Gastrocnemius medialis (tissue), 4 donors: ENCODE measurements at regions of chr18 and their contacts with region 1.

Region 1: GRCh38 chr18:46073474-46074331 is 1.6 kb upstream of the PSTPIP2 start:
- DNase-seq: no peak
- ATAC-seq: peak; percentile 62 to 70
- H3K4me3 ChIP-seq: no peak overlapping the region
- H3K27ac ChIP-seq: no peak overlapping the region
- H3K4me1 ChIP-seq: peaks cover 16% of the 10 kb centered on the region in 2 donors
- H3K27me3 ChIP-seq: no peaks in the 10 kb centered on the region
- CTCF ChIP-seq: peak; percentile 58 to 72 (median 66)
- POLR2A ChIP-seq: no peak

Region 2: DNA sequence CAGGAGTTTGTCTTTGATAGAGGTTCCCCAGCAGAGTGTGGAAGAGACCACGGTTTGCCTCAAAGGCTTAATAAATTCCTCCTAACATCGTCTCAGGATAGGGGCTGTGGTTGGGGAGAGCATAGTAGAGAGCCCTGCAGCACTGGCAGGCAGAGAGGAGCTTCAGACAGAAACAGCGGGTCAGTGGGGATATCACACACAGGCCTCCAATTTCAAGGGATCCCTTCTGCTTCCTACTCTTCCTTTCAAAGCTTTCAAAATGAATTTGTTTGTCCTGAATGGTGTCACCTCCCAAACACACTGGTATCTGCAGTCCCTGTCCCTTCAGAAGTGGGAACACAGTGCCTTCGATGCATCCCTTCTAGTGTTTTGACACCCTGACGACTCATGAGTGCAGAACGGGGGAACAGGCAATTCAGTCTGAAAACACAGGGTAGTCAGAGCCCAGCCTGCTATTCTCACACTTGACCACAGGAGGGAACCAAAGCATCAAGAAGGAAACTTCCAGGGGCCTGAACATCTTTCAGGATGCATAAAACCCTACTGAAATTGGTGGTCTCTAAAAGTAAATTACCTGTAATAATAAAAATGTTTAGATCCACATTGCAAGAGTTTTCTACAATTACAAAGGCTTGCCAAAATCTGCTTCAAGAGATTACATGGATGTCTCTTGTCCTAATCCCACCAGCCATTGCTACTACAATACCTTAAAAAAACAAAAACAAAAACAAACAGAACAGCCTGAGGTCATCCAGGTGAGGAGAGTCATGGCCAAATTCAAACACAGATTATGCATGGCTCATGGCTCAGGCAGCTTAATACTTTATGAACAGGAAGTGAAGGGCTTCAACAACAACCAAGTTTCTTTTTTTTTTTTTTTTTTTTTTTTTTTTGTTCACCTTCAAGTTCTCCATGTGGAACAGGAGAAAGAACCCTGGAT is 408.6 kb before region 1 on chr18:
- in situ Hi-C with region 1: loop called in 2 of 4 experiments (anchors 10 to 25 kb)
- intact Hi-C with region 1: loop called (anchors 5 kb)
- DNase-seq: peak; percentile 24 to 44
- ATAC-seq: peak; percentile 51 to 54
- H3K4me3 ChIP-seq: no peak overlapping the region
- H3K27ac ChIP-seq: no peak overlapping the region
- H3K4me1 ChIP-seq: peaks cover 10 to 13% of the 10 kb centered on the region in 2 donors
- H3K27me3 ChIP-seq: no peaks in the 10 kb centered on the region
- CTCF ChIP-seq: peak; percentile 79 to 95 (median 82)
- POLR2A ChIP-seq: no peak

Region 3: GRCh38 chr18:45690975-45691815 is 382.5 kb before region 1 on chr18:
- in situ Hi-C with region 1: loop called in 1 of 4 experiments (anchors 25 kb)
- intact Hi-C with region 1: loop called (anchors 10 kb)
- DNase-seq: peak in 1 of 2 donors; percentile 44
- ATAC-seq: peak; percentile 42 to 78
- H3K4me3 ChIP-seq: no peak overlapping the region
- H3K27ac ChIP-seq: no peak overlapping the region
- H3K4me1 ChIP-seq: no peaks in the 10 kb centered on the region
- H3K27me3 ChIP-seq: no peaks in the 10 kb centered on the region
- CTCF ChIP-seq: peak; percentile 54 to 78 (median 68)
- POLR2A ChIP-seq: no peak

Region 4: GRCh38 chr18:45856531-45856930 is 217.2 kb before region 1 on chr18:
- in situ Hi-C with region 1: no loop called
- intact Hi-C with region 1: no loop called
- DNase-seq: no peak
- ATAC-seq: no peak
- H3K4me3 ChIP-seq: no peak overlapping the region
- H3K27ac ChIP-seq: no peak overlapping the region
- H3K4me1 ChIP-seq: peaks cover 0 to 2% of the 10 kb centered on the region in 2 donors
- H3K27me3 ChIP-seq: no peaks in the 10 kb centered on the region
- CTCF ChIP-seq: no peak
- POLR2A ChIP-seq: no peak

Region 5: GRCh38 chr18:45926085-45926484 is 147.6 kb before region 1 on chr18:
- in situ Hi-C with region 1: loop called in 1 of 4 experiments (anchors 25 kb)
- intact Hi-C with region 1: loop called (anchors 5 kb)
- DNase-seq: no peak
- ATAC-seq: no peak
- H3K4me3 ChIP-seq: no peak overlapping the region
- H3K27ac ChIP-seq: no peak overlapping the region
- H3K4me1 ChIP-seq: peaks cover 0 to under 1% of the 10 kb centered on the region in 2 donors
- H3K27me3 ChIP-seq: no peaks in the 10 kb centered on the region
- CTCF ChIP-seq: no peak
- POLR2A ChIP-seq: no peak

Region 6: DNA sequence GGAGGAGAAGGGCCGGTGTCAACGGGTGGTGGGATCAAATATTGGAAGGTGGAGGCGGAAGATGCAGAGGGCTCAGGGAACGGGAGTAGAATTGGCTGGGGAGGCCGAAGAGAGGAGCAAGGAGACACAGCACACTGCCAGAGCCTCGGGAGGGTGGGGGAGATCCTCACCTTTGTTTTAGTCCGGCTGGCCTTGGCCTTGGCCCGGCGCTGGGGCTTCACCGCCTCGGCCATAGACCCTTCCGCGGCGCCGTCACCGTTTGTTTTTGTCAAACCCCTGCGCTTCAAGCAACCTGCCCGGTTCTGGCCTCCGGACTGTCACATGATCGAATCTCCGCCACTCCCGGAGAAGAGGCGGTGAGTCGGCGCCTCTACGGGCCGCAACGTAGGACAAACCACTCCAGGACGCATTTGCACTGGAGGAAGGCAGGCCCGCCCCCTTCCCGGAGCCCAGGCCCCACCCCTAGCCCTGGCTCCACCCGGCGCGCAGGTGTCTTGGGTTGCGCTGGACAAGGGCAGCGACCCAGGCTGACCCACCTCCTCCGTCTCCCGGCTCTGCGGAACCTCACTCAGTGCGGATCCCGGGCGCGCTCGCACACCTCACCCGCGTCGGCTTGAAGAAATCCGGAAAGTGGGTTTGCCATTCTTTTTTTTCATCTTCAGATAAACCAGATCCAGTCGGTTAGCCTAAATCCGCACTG is 106.5 kb before region 1 on chr18 and contains the start of gene EPG5:
- in situ Hi-C with region 1: loop called in 2 of 4 experiments (anchors 10 kb)
- intact Hi-C with region 1: loop called (anchors 2 kb)
- DNase-seq: peak; percentile 95 to 97
- ATAC-seq: peak; percentile 98 to 99
- H3K4me3 ChIP-seq: peak within 1 kb of the TSS; percentile 73 to 96 (median 95)
- H3K27ac ChIP-seq: peak within 1 kb of the TSS; percentile 87 to 92 (median 91)
- H3K4me1 ChIP-seq: peaks cover 15 to 21% of the 10 kb centered on the region in 2 donors
- H3K27me3 ChIP-seq: no peaks in the 10 kb centered on the region
- CTCF ChIP-seq: no peak
- POLR2A ChIP-seq: peak; percentile 65 to 87
- total RNA-seq, gene EPG5: 18.7 to 30.3 (median 24.0) TPM

Region 7: DNA sequence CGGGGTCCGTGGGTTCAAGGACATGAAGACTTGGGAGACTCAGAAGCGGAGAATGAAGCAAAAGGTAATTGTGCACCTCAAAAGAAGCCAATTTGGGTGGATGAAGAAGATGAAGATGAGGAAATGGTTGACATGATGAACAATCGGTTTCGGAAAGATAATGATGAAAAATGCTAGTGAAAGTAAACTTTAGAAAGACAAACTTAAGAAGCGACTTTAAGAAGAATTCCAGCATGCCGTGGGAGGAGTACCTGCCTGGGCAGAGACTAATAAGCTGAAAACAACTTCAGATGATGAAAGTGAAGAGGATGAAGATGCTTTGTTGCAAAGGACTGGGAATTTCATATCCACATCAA is 45.2 kb before region 1 on chr18:
- in situ Hi-C with region 1: no loop called
- intact Hi-C with region 1: loop called (anchors 2 kb)
- DNase-seq: no peak
- ATAC-seq: no peak
- H3K4me3 ChIP-seq: peak overlapping the region; percentile 54 to 73 (median 63)
- H3K27ac ChIP-seq: peak overlapping the region; percentile 18 to 48 (median 33)
- H3K4me1 ChIP-seq: peaks cover 3% of the 10 kb centered on the region in 2 donors
- H3K27me3 ChIP-seq: no peaks in the 10 kb centered on the region
- CTCF ChIP-seq: no peak
- POLR2A ChIP-seq: no peak

Region 8: DNA sequence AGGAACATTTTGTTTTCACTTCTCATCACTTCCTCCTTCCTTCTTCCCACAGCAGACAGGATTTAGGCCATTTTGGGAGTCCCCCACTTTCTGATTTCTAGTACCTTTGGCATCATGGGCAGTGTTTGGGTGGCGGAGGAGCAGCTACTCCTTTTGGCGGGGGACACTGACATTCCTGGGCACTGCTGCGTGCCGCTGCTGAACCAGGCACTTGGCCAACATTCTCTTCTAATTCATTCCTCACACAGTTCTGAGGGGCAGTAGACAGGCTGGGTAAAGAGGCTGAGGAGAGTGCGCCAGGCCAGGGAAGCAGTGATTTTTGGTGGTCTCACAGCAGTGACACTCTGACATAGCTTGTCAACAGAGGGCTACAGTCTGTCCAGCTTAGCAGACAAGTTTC is 313.1 kb after region 1 on chr18:
- in situ Hi-C with region 1: no loop called
- intact Hi-C with region 1: no loop called
- DNase-seq: peak in 1 of 2 donors; percentile 21
- ATAC-seq: peak; percentile 28 to 35
- H3K4me3 ChIP-seq: no peak overlapping the region
- H3K27ac ChIP-seq: peak overlapping the region in 1 of 4 donors; percentile 62
- H3K4me1 ChIP-seq: peaks cover 26 to 28% of the 10 kb centered on the region in 2 donors
- H3K27me3 ChIP-seq: no peaks in the 10 kb centered on the region
- CTCF ChIP-seq: no peak
- POLR2A ChIP-seq: no peak